ENCODE measurements at regions of chr19 and their contacts with region 1.

Region 1: DNA sequence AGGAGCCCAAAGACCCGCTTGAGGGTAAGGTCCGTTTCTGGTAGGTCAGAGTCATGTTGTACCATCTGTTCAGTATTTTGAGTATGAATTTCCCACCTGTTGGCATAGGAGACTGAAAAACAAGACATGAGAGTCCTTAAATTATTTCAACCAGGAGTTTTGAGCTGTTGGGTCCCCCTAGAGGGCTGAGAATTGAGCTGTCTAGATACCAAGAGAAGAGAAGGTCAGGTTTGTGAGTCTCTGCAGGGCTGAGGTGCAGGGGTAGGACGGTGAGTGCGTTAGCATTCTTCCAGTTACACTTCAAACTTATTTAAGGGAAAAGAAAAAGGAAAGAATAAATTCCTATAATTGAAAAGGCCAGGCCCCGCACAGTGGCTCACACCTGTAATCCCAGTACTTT is 5.0 kb downstream of the CBLC start:
- DNase-seq: no peak
- ATAC-seq: no peak
- H3K4me3 Mint-ChIP-seq: no peak overlapping the region
- H3K27ac Mint-ChIP-seq: no peak overlapping the region
- H3K4me1 Mint-ChIP-seq: peaks cover 4% of the 10 kb centered on the region
- H3K27me3 Mint-ChIP-seq: peaks cover 8% of the 10 kb centered on the region

Region 2: DNA sequence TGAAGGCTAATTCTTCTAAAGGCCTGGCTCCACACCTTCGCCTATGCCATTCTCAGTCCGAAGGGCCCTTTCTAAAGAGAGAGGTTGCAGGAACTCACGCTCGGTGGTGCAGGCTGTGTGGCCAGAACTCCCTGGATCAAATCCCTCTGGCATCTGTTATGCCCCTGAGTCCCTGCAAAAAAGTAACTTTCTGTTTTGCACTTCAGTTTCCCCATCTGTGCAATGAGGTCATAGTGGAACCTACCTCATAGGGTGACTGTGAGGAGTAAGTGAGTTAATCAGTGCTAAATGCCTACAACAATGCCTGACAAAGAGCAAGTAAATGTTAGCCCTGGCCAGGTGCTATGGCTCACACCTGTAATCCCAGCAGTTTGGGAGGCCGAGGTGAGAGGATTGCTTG is 162.1 kb before region 1 on chr19:
- CTCF ChIA-PET with region 1: no interaction called
- DNase-seq: no peak
- ATAC-seq: no peak
- H3K4me3 Mint-ChIP-seq: no peak overlapping the region
- H3K27ac Mint-ChIP-seq: no peak overlapping the region
- H3K4me1 Mint-ChIP-seq: no peaks in the 10 kb centered on the region
- H3K27me3 Mint-ChIP-seq: no peaks in the 10 kb centered on the region

Region 3: GRCh38 chr19:44796701-44797115 is 14.0 kb after region 1 on chr19:
- CTCF ChIA-PET with region 1: interaction called, 10 read pairs
- DNase-seq: no peak
- ATAC-seq: no peak
- H3K4me3 Mint-ChIP-seq: no peak overlapping the region
- H3K27ac Mint-ChIP-seq: no peak overlapping the region
- H3K4me1 Mint-ChIP-seq: peaks cover 9% of the 10 kb centered on the region
- H3K27me3 Mint-ChIP-seq: no peaks in the 10 kb centered on the region

Region 4: DNA sequence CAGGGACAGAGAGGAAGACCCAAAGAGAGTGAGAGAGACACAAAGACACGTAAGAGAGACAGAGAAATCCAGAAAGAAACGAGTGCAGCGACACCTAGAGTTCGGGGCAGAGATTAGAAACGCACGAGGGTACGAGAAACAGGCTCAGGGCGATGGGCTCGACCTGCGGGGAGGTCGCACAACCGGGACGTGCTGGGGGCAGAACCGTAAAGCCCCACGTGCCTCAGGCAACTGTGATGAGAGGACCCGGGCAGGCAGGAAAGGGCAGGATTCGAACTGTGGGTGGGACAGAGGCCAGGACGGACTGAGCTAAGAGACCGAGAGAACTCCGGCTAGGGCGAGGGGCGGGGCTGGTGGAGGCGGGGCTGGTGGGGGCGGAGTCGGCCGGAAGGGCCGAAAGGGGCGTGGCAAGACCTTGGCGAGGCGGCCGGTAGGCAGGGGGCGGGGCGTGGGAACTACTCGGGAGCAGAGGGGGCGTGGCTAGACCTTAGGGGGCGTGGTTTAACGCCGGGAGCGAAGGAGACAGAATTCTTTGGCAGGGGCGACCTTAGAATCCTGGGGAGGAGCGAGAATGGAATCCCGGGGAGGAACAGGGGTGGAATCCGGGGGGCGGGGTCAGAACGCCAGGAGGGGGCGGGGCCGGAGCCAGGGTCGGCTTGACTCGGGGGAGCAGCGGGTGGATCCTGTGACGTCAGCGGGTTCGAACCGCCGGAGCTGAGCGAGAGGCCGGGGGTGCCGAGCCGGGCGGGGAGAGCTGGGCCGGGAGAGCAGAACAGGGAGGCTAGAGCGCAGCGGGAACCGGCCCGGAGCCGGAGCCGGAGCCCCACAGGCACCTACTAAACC is 63.1 kb after region 1 on chr19 and contains the start of gene NECTIN2:
- CTCF ChIA-PET with region 1: interaction called, 19 read pairs
- DNase-seq: peak; percentile 93
- ATAC-seq: peak; percentile 74
- H3K4me3 Mint-ChIP-seq: peak within 1 kb of the TSS; percentile 74
- H3K27ac Mint-ChIP-seq: peak within 1 kb of the TSS; percentile 55
- H3K4me1 Mint-ChIP-seq: peaks cover 21% of the 10 kb centered on the region
- H3K27me3 Mint-ChIP-seq: peaks cover 38% of the 10 kb centered on the region
- total RNA-seq, gene NECTIN2: 0.49 to 0.67 TPM

Measured in activated CD8-positive, alpha-beta memory T cell treated with anti-CD3 and anti-CD28 coated beads, Interleukin-2, amount 10 ng/mL, durations not matched to agents 7 days and 5 days (primary cell).